ENCODE measurements at regions of chr12 and their contacts with region 1.

Region 1: GRCh38 chr12:39103552-39104165 is 198.3 kb upstream of the CPNE8 start:
- DNase-seq: peak; percentile 53
- H3K4me3 ChIP-seq: no peak overlapping the region
- H3K27ac ChIP-seq: no peak overlapping the region
- H3K4me1 ChIP-seq: no peaks in the 10 kb centered on the region
- H3K27me3 ChIP-seq: peaks cover 0 to 2% of the 10 kb centered on the region in 2 experiments
- CTCF ChIP-seq: peak; percentile 56 to 68
- POLR2A ChIP-seq: no peak

Region 2: DNA sequence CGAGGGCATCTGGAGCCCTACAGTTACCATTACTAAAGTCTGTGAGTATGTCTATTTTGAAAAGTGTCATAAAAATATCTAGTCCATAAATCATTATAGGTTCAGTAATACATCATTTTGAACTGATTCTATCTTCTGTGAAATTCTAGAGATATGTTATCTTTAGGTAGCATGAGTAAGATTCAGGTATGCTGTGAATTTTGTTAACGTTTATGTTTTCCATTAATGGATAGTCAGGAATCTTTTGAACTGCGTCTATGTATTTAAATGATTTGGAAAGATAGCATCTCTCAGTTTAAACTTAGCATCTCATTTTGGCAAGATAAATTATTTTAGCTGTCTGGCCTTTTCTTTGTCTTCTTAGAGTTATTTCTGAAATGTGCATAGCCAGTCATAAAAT is 778.8 kb before region 1 on chr12:
- CTCF ChIA-PET with region 1: interaction called, 27 read pairs
- POLR2A ChIA-PET with region 1: no interaction called
- dilution Hi-C with region 1: no loop called
- intact Hi-C with region 1: loop called (anchors 1 kb)
- DNase-seq: no peak
- H3K4me3 ChIP-seq: no peak overlapping the region
- H3K27ac ChIP-seq: no peak overlapping the region
- H3K4me1 ChIP-seq: no peaks in the 10 kb centered on the region
- H3K27me3 ChIP-seq: no peaks in the 10 kb centered on the region
- CTCF ChIP-seq: no peak
- POLR2A ChIP-seq: no peak

Region 3: DNA sequence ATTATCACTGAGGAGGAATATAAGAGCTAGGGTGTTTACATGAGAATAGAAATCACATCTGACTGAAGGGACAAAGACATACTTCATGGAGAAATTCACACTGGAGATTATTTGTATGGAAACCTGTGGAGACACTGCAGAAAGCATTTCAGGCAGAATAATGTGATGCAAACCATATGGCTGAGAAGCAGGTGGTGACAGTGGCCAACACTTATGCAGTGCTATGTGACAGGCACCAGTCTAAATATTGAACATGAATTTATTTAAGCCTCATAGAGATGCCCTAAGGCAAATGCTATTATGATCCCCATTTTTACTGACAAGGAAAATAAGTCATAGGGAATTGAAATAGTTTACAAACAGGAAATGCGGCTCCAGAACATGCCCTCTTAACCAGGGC is 770.8 kb before region 1 on chr12:
- CTCF ChIA-PET with region 1: interaction called, 27 read pairs
- POLR2A ChIA-PET with region 1: no interaction called
- dilution Hi-C with region 1: no loop called
- intact Hi-C with region 1: loop called (anchors 1 kb)
- DNase-seq: no peak
- H3K4me3 ChIP-seq: no peak overlapping the region
- H3K27ac ChIP-seq: no peak overlapping the region
- H3K4me1 ChIP-seq: no peaks in the 10 kb centered on the region
- H3K27me3 ChIP-seq: no peaks in the 10 kb centered on the region
- CTCF ChIP-seq: no peak
- POLR2A ChIP-seq: no peak

Region 4: DNA sequence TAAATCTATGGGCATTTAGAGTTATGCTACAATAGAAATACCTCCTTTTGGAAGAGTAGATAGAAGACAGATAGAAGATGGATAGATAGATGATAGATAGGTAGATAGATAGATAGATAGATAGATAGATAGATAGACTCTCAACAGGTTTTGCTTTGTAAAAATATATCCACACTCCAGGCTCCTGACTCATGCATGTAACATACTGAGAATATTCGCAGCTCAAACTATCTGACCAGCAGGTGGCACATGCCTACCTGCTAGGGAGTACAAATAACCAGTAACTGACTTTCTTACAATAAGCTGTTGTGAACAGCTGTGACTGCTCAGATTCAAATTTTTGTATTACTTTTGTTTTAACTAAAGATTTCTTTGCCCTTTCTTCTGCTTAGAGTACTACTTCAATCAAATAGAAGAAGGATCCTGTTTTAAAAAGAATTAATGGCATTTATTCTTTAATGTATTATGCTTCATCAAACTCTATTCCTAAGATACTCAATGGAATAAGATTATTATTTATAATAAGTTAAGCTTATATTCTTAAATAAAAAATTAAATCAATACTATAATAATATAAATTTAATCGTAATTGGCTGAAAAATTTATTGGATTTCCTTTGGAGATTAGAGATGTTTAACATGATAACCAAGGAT is 182.5 kb before region 1 on chr12:
- CTCF ChIA-PET with region 1: interaction called, 75 read pairs
- POLR2A ChIA-PET with region 1: no interaction called
- dilution Hi-C with region 1: no loop called
- intact Hi-C with region 1: loop called (anchors 1 kb)
- DNase-seq: peak; percentile 68
- H3K4me3 ChIP-seq: no peak overlapping the region
- H3K27ac ChIP-seq: no peak overlapping the region
- H3K4me1 ChIP-seq: no peaks in the 10 kb centered on the region
- H3K27me3 ChIP-seq: no peaks in the 10 kb centered on the region
- CTCF ChIP-seq: peak; percentile 48 to 58
- POLR2A ChIP-seq: no peak

Region 5: GRCh38 chr12:39116867-39117266 is 13.2 kb after region 1 on chr12:
- CTCF ChIA-PET with region 1: no interaction called
- POLR2A ChIA-PET with region 1: no interaction called
- dilution Hi-C with region 1: no loop called
- intact Hi-C with region 1: no loop called
- DNase-seq: no peak
- H3K4me3 ChIP-seq: no peak overlapping the region
- H3K27ac ChIP-seq: no peak overlapping the region
- H3K4me1 ChIP-seq: no peaks in the 10 kb centered on the region
- H3K27me3 ChIP-seq: no peaks in the 10 kb centered on the region
- CTCF ChIP-seq: no peak
- POLR2A ChIP-seq: no peak

Region 6: DNA sequence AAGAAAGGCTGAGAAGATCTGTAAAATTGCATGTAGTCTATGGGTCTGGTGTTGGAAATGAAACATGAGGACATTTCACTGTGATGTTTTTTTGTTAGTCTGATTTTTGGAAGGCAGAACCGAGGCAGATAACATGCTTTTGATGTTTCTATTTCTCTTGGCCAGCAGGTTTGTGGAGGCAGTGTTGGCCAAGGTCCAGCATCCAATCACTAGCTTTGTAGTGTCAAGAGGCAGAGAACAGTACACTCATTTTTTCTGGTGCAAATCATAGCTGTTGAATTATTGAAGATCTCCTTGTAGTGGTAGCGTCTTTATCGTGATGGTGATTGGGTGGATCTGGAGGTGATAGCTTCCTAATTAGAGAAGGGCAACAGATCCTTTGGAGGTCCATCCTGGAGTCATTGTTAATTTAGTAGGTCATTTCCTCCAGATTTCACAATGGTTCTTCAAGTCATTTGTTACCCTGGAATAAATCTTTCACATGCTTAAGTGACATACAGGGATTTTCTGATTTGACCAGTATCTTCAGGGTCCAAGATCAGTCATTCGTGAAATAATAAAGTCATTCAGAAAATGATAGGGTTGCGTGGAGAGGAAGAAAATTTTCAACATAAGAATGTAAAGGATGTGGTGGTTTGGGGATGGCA is 54.2 kb after region 1 on chr12:
- CTCF ChIA-PET with region 1: no interaction called
- POLR2A ChIA-PET with region 1: no interaction called
- dilution Hi-C with region 1: no loop called
- intact Hi-C with region 1: no loop called
- DNase-seq: no peak
- H3K4me3 ChIP-seq: no peak overlapping the region
- H3K27ac ChIP-seq: no peak overlapping the region
- H3K4me1 ChIP-seq: no peaks in the 10 kb centered on the region
- H3K27me3 ChIP-seq: peaks cover 0 to 2% of the 10 kb centered on the region in 2 experiments
- CTCF ChIP-seq: no peak
- POLR2A ChIP-seq: no peak

Region 7: DNA sequence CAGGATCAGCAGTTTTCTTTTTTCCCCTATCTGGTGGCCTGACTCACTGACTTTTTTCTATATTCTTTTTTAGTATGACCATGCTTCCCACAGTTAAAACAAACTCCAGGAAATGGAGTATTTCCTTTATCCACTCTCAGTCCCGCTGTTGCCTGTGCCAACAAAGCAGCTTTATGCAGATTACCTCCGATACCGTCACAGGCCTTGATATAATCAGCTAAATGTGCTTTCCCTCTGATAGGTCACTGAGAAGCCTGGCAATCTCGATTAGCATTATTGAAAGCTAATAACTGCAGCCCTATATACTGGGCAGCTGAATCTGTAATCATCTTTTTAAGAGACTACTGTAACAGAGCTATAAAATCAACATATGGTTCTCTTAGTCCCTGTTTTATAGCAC is 95.7 kb after region 1 on chr12:
- CTCF ChIA-PET with region 1: no interaction called
- POLR2A ChIA-PET with region 1: no interaction called
- dilution Hi-C with region 1: no loop called
- intact Hi-C with region 1: no loop called
- DNase-seq: peak; percentile 88
- H3K4me3 ChIP-seq: no peak overlapping the region
- H3K27ac ChIP-seq: no peak overlapping the region
- H3K4me1 ChIP-seq: peaks cover 8% of the 10 kb centered on the region
- H3K27me3 ChIP-seq: peaks cover 3 to 5% of the 10 kb centered on the region in 2 experiments
- CTCF ChIP-seq: no peak
- POLR2A ChIP-seq: no peak